Esophagus squamous epithelium (tissue), 5 donors: ENCODE measurements at regions of chr9 and their contacts with region 1.

Region 1: DNA sequence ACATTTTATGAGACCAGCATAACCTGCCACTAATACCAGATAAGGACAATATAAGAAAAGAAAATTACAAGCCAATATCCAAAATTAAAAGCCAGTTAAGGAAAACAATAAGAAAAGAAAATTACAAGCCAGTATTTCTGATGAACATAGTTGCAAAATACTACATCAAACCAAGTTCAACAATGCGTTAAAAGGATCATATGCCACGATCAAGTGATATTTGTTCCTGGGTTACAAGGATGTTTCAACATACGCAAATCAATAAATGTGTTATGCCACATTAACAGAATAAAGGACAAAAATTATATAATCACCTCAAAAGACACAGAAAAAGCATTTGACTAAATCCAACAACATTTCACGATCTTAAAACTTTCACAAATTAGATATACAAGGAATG is 431.9 kb downstream of the ELAVL2 start:
- DNase-seq: no peak
- H3K4me3 ChIP-seq: no peak overlapping the region
- H3K27ac ChIP-seq: no peak overlapping the region
- H3K4me1 ChIP-seq: no peaks in the 10 kb centered on the region
- H3K27me3 ChIP-seq: no peaks in the 10 kb centered on the region
- CTCF ChIP-seq: no peak
- POLR2A ChIP-seq: no peak

Region 2: GRCh38 chr9:23441275-23441674 is 47.1 kb after region 1 on chr9:
- intact Hi-C with region 1: loop called (anchors 5 kb)
- DNase-seq: no peak
- H3K4me3 ChIP-seq: no peak overlapping the region
- H3K27ac ChIP-seq: no peak overlapping the region
- H3K4me1 ChIP-seq: no peaks in the 10 kb centered on the region
- H3K27me3 ChIP-seq: no peaks in the 10 kb centered on the region
- CTCF ChIP-seq: no peak
- POLR2A ChIP-seq: no peak